Astrocyte of the cerebellum (primary cell): ENCODE measurements at regions of chr19 and their contacts with region 1.

Region 1: DNA sequence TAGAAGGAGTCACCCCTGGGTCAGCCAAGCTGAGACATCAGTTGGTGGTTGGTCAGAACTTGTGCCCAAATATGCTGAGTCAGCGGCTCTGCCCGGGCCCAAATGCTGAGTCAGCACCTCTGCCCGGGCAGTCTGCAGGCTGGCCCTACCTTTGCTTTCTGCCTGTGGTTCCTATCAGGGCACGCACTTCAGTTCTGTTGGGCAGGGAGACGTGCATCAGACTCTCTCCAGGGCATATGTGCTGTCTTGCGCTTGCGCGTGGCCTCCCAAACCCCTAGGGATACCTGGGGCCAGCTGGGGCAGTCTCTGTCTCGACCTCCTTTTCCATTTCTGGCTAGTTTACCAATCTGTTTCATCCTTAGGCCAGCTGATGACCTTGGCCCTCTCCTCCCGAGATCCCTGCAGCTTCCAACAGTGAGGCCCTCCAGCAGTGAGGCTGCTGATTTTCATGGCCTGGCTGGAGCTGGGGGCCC is 24.4 kb upstream of the LDLR start:
- DNase-seq: no peak
- H3K4me3 ChIP-seq: no peak overlapping the region
- CTCF ChIP-seq: no peak

Region 2: GRCh38 chr19:10960314-10961072 is 104.4 kb before region 1 on chr19 and contains the start of gene SMARCA4:
- in situ Hi-C with region 1: loop called (anchors 5 kb)
- DNase-seq: peak; percentile 92
- H3K4me3 ChIP-seq: peak within 1 kb of the TSS; percentile 87
- CTCF ChIP-seq: no peak

Region 3: DNA sequence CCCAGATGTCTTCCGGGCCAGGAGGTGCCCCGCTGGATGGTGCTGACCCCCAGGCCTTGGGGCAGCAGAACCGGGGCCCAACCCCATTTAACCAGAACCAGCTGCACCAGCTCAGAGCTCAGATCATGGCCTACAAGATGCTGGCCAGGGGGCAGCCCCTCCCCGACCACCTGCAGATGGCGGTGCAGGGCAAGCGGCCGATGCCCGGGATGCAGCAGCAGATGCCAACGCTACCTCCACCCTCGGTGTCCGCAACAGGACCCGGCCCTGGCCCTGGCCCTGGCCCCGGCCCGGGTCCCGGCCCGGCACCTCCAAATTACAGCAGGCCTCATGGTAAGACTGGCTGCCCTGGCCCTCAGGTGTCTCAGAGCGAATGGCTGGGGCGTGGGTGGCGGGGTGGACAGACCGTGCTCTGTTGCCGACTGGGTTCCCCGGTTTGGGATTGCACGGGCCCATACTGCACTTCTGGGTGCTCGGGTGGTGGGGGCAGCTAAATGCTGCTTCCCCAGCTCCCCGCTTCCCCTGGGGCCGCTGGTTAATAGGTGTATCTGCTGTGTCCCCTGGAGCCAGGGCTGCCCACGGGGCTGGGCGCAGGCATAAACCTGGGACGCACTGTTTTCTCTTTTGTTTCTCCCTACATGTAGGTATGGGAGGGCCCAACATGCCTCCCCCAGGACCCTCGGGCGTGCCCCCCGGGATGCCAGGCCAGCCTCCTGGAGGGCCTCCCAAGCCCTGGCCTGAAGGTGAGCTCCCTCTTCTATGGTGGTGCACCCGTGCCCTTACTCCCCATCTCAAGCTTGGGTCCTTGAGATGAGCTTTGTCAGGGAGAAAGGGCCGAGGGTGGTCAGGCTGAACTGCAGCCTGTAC is 78.4 kb before region 1 on chr19:
- in situ Hi-C with region 1: loop called (anchors 5 kb)
- DNase-seq: no peak
- H3K4me3 ChIP-seq: no peak overlapping the region
- CTCF ChIP-seq: no peak